ENCODE measurements at regions of chr6 and their contacts with region 1.

Region 1: DNA sequence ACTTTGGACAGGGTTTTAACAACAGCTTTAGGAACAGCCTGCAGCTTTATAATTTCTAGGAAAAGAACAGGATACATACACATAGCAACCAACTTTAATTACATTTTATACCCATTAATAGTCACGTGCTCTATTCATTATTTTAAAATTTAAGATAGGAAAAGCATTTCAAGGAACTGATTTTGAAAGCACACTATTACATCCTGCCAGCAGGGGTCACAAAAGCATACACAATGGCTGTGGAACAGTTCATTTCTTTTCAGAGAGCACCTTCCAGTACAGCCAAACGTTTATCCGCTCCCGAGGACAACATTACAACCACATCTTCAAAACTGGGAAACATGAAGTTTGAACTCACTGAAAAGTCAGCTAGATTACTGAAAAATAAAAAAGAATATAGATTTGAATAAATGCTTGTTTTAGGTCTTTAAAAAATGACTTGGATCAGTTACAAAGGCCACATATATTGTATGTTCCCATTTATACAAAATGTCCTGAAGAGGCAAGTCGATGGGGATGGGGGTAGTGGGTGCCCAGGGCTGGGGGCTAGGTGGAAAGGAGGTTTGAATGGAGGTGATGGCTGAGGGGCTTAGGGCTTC is 104.6 kb upstream of the EXOC2 start:
- DNase-seq: peak in 32 of 42 donors; percentile 16 to 83 (median 54)

Region 2: DNA sequence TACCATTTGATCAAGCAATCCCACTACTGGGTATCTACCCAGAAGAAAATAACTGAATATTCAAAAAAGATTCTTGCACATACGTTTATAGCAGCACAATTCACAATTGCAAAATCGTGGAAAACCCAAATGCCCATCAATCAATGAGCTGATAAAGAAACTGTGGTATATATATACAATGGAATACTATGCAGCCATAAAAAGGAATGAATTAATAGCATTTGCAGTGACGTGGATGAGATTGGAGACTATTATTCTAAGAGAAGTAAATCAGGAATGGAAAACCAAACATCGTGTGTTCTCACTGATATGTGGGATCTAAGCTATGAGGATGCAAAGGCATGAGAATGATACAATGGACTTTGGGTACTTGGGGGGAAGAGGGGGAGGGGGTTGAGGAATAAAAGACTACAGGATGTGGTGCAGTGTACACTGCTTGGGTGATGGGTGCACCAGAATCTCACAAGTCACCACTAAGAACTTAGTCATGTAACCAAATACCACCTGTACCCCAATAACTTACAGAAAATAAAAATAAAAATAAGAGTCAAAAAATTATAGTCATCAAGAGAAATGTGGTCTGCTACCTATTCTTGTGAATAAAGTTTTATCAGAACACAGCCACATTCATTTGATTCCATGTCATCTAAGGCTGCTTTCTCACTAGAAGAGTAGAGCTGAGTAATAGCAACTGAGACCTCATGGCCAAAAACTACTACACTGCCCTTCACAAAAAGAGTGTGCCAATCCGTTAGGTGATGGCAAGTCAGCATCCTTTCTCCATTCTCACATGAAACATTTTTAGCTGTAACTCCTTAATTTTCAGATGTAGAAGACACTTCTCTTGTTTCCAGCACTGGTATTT is 131.9 kb before region 1 on chr6:
- intact Hi-C with region 1: no loop called
- DNase-seq: no peak

Region 3: DNA sequence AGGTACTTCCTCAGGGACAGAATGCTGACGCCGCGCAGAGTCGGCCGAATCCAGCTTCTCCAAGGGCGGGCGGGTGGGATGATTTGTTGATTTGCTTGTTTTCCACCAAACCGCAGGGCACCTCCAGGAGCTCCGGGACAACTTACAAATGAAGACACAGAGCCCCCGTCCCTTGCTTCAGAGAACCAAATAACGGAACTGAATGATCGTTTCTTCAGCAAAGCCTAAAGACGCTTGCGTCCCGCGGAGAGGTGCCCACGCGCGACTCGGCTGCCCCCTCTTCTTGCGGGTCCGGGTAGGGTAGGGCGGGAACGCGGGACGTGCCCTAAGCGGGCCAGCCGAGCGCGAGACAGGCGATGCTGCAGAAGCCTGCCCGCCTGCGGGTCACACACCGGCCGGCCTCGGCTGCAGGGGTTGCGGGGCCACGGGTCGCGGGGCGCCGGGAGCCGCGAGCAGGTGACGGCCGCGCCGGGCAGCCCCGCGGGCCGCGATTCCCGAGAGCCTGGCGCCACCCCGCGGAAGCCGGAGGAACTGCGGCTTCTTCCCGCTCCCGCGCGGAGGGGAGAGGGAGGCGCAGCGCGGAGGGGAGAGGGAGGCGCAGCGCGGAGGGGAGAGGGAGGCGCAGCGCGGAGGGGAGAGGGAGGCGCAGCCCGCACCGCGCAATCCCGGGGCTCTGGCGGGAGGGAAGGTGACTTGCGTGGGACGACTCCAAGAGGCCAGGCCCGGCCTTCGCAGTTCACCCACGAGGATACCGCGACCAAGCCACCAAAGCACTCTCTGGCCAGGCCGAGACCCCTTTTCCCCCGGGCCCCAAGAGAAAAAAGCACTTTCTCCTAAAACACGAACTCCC is 584.1 kb after region 1 on chr6:
- intact Hi-C with region 1: loop called (anchors 5 kb)
- DNase-seq: peak in 34 of 42 donors; percentile 23 to 84 (median 64)

Region 4: DNA sequence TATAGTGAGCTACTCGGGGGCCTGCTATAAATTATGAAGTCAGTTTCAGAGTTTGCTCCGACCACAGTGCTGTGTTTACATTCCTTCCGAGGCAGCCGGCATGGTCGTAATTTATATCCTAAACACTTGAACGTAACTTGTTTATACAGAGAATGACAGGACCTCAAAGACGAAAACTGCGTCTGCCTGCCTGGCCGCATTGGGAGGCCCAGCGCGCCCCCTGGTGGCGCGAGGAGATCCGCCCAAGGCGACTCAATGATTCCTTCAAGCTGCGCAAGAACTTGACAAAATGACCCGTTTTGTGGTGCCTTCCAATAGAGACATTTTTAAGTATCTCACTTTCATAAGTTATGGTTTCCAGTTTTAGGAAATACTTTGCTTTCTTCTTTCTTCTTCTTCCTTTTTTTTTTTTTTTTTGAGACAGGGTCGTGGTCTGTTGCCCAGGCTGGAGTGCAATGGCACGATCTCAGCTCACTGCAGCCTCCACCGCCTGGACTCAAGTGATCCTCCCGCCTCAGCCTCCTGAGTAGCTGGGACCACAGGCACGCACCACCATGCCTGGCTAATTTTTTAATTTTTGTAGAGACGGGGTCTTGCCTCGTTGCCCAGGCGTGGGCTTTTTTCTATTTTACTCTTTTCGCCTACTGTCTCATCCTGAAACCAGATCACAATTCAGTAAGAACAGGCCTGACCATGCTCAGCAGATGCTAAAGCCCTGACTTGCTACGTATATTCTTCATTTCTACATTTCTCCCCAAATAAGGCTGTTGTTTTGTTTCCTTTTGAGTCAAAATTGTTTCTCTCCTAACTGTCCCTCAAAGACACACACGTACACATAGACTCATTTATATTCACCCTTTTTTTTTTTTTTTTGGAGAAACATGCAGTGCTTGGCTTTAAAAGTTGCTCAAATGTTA is 599.6 kb after region 1 on chr6:
- intact Hi-C with region 1: loop called (anchors 5 kb)
- DNase-seq: peak; percentile 25 to 84 (median 69)